ENCODE measurements at regions of chr1 and their contacts with region 1.

Region 1: DNA sequence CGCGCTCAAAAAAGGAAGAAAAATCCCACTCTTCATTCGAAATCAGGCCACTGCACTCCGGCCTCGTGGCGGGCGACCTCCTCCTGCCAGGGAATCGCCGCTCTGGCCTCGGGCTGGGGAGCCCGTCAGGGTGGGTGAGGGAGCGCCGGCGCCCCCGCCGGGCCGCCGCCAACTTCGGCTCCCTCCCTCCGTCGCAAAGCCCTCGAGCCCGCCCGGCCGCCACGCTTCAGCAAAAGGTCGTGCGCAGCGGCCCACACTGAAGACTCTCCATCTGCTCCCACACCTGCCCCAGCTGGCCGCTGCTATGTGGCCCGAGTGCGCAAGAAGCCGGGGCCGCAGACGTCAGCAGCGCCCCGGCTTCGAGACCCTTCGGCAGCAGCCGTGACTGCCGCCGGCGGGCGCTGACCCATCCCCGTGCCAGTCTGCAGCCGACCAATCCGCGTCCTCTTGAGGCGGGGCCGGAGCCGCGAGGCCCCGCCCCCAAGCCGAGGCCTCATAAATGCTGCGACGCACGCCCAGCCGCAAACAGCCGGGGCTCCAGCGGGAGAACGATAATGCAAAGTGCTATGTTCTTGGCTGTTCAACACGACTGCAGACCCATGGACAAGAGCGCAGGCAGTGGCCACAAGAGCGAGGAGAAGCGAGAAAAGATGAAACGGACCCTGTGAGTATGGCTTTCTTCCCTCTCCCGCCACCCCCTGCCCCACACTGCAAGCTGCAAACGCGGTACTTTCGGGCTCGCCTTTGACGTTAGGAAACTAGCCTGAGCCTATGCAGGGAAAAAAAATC is at the start of gene RGS2:
- DNase-seq: peak; percentile 94
- H3K4me3 ChIP-seq: peak within 1 kb of the TSS; percentile 47 to 96 (median 62)
- H3K27ac ChIP-seq: peak within 1 kb of the TSS; percentile 92 to 96 (median 94)
- H3K4me1 ChIP-seq: peaks cover 0 to 25% (median 4%) of the 10 kb centered on the region in 4 donors
- H3K27me3 ChIP-seq: no peaks in the 10 kb centered on the region
- CTCF ChIP-seq: no peak
- EP300 ChIP-seq: no peak
- POLR2A ChIP-seq: peak; percentile 99
- total RNA-seq, gene RGS2: 22.1 to 132 (median 68.9) TPM

Region 2: DNA sequence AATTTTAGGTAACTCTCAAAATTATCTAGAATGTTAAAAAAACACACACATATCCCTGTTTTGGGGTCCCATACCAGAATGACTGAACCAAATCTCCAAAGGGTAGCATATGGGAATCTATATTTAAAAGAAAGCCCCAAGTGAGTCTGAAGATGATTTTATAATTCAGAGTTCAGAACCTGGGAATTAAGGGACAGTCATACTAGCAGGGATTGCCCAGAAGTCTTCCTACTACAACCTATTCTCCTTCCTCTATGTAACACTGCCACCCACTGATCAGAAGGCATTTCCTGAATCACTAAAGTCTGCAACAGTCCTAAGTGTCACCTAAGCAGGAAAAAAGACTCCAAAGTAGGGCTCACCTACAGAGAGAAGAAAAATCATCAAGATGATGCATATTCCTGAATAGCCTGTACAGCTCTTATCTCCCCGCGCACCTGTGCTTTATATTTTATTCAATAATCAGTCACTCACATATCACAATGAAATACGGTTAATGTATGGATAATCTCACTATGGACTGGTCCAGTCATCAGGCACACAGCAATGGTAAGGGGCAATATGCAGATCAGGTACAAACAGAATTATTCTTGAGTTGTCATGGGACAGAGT is 228.3 kb before region 1 on chr1:
- in situ Hi-C with region 1: loop called in 1 of 4 experiments (anchors 25 kb)
- intact Hi-C with region 1: no loop called
- DNase-seq: peak; percentile 16
- H3K4me3 ChIP-seq: peak overlapping the region in 1 of 4 donors; percentile 29
- H3K27ac ChIP-seq: peak overlapping the region; percentile 61 to 72 (median 63)
- H3K4me1 ChIP-seq: peaks cover 0 to 8% (median 0%) of the 10 kb centered on the region in 4 donors
- H3K27me3 ChIP-seq: no peaks in the 10 kb centered on the region
- CTCF ChIP-seq: peak in 3 of 5 experiments; percentile 18 to 27 (median 22)
- EP300 ChIP-seq: no peak
- POLR2A ChIP-seq: no peak

Region 3: DNA sequence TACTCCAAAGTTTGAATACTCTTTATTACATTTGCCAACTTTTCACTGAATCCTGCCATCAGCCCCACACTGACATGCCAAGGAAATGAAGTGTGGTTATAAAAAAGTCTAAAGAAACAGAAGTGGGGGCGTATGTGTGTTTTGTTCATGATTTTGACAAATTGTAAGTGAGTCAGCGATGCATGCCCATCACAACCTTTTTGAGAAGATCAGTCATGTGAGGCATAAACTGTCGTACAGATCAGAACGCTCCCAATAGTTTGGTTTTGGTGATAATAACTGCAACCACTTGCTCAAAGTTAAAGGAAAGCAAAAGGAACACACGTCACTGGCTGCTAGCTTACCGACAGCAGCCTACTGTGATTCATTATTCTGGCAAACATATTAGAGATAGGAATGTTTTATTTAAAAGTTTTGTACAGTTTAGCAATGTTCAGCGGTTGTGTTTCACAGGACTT is 95.8 kb after region 1 on chr1:
- in situ Hi-C with region 1: no loop called
- intact Hi-C with region 1: loop called (anchors 10 kb)
- DNase-seq: no peak
- H3K4me3 ChIP-seq: no peak overlapping the region
- H3K27ac ChIP-seq: peak overlapping the region; percentile 40 to 78 (median 72)
- H3K4me1 ChIP-seq: peaks cover 0 to 7% (median 1%) of the 10 kb centered on the region in 4 donors
- H3K27me3 ChIP-seq: no peaks in the 10 kb centered on the region
- CTCF ChIP-seq: no peak
- EP300 ChIP-seq: peak; percentile 80
- POLR2A ChIP-seq: no peak

Region 4: DNA sequence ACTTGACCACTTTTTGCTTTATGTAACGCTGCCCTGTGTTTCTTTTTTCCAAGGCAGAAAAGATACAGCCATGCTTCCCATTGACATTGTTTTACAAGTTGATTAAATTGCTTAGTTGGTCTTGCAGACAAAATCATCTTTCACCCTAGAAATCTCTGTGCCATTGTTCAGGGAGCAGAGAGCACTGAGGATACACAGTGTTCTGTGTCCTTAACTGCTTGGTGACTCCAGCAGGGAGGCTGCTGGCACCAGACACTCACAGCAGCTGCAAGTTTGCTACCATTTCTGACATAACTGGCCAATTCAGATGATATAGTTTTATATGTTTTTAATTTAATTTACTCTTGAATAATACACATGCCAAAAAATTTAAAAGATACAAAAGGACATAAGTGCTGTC is 118.8 kb after region 1 on chr1:
- in situ Hi-C with region 1: no loop called
- intact Hi-C with region 1: no loop called
- DNase-seq: no peak
- H3K4me3 ChIP-seq: no peak overlapping the region
- H3K27ac ChIP-seq: no peak overlapping the region
- H3K4me1 ChIP-seq: no peaks in the 10 kb centered on the region
- H3K27me3 ChIP-seq: no peaks in the 10 kb centered on the region
- CTCF ChIP-seq: no peak
- EP300 ChIP-seq: no peak
- POLR2A ChIP-seq: no peak

Region 5: GRCh38 chr1:193013005-193013404 is 204.3 kb after region 1 on chr1:
- in situ Hi-C with region 1: loop called in 3 of 4 experiments (anchors 10 kb)
- intact Hi-C with region 1: loop called (anchors 2 kb)
- DNase-seq: no peak
- H3K4me3 ChIP-seq: no peak overlapping the region
- H3K27ac ChIP-seq: peak overlapping the region; percentile 4 to 58 (median 50)
- H3K4me1 ChIP-seq: peaks cover 0 to 42% (median 19%) of the 10 kb centered on the region in 4 donors
- H3K27me3 ChIP-seq: no peaks in the 10 kb centered on the region
- CTCF ChIP-seq: no peak
- EP300 ChIP-seq: no peak
- POLR2A ChIP-seq: no peak

Region 6: DNA sequence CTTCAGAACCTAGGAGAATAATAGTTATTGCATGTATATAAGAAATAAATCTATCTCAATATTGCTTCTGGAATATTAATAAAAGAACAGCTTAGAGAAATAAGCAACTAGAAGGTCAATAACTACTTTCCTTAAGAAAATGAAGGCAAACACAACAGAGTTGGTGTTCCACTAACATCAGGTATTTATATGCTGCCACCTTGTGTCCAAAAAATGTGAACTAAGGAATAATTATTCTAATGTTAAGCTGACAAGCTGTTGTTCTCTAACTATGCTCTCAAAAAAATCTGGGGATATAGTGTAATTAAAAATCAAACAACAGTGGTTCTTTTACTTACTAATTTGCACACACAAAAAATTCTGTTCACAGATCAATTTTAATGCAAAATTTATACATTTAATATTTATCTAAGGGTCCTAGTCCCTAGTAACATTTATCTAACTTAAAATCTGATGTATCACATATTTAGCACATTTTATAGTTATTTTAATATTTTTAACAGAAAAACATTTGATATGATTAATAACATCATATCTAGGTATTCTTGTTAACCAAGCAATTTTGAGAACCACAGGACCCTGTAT is 210.8 kb after region 1 on chr1:
- in situ Hi-C with region 1: loop called in 3 of 4 experiments (anchors 10 kb)
- intact Hi-C with region 1: loop called (anchors 2 kb)
- DNase-seq: no peak
- H3K4me3 ChIP-seq: no peak overlapping the region
- H3K27ac ChIP-seq: peak overlapping the region in 2 of 4 donors; percentile 7 to 27
- H3K4me1 ChIP-seq: peaks cover 0 to 11% (median 0%) of the 10 kb centered on the region in 4 donors
- H3K27me3 ChIP-seq: no peaks in the 10 kb centered on the region
- CTCF ChIP-seq: peak; percentile 44 to 70 (median 56)
- EP300 ChIP-seq: no peak
- POLR2A ChIP-seq: no peak

Region 7: DNA sequence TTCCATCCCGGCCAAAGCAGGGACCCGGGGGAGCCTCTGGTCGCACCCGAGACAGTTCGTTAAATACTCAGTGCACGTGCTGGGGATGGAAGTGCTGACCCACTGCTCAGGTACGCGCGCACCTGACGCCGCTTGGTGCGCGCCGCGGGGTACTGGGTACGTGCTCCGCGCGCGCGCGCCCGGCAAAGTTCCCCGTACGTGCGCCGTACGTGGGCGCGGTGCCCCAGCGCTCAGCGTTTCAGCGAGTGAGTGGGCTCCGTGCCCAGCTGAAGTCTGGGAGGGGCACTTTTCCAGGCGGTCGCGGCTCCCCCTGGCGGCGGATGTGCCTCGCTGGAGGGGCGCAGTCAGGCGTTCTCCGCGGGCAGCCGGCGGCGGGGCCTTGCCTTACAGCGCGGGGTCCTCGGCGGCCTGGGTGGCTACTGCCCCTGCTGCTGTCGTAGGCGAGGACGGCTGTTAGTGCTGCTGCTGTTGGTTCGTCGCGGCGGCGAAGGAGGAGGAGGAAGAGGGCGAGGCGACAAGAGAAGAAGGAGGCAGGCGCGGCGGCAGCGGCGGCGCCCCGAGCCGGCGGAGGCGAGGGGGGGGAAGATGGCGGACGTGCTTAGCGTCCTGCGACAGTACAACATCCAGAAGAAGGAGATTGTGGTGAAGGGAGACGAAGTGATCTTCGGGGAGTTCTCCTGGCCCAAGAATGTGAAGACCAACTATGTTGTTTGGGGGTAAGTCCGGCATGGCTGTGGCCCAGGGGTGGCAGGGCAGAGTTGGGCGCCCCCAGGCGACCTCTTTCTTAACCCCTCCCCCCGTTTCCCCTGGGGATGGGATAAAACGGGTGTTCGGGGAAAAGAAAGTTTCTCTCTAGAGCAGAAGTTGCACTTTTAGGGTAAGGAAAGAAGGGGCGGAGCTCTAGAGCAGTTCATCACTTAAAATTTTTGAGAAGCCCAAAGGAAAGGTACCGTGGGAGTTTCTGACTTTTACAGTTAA is 313.2 kb after region 1 on chr1 and contains the start of gene CDC73:
- in situ Hi-C with region 1: loop called in 1 of 4 experiments (anchors 25 kb)
- intact Hi-C with region 1: no loop called
- DNase-seq: peak; percentile 99
- H3K4me3 ChIP-seq: peak within 1 kb of the TSS; percentile 41 to 99 (median 81)
- H3K27ac ChIP-seq: peak within 1 kb of the TSS; percentile 94 to 99 (median 96)
- H3K4me1 ChIP-seq: peaks cover 7 to 24% (median 10%) of the 10 kb centered on the region in 4 donors
- H3K27me3 ChIP-seq: no peaks in the 10 kb centered on the region
- CTCF ChIP-seq: peak; percentile 87 to 99 (median 94)
- EP300 ChIP-seq: peak; percentile 76
- POLR2A ChIP-seq: peak; percentile 95
- total RNA-seq, gene CDC73: 26.2 to 208 (median 54.6) TPM